ENCODE measurements at regions of chr3 and their contacts with region 1.

Region 1: GRCh38 chr3:32401556-32402081 is 10.0 kb downstream of the CMTM7 start:
- DNase-seq: peak; percentile 74
- H3K4me3 Mint-ChIP-seq: peak overlapping the region; percentile 85
- H3K27ac Mint-ChIP-seq: peak overlapping the region; percentile 99
- H3K4me1 Mint-ChIP-seq: peaks cover 58% of the 10 kb centered on the region
- H3K27me3 Mint-ChIP-seq: no peaks in the 10 kb centered on the region

Region 2: DNA sequence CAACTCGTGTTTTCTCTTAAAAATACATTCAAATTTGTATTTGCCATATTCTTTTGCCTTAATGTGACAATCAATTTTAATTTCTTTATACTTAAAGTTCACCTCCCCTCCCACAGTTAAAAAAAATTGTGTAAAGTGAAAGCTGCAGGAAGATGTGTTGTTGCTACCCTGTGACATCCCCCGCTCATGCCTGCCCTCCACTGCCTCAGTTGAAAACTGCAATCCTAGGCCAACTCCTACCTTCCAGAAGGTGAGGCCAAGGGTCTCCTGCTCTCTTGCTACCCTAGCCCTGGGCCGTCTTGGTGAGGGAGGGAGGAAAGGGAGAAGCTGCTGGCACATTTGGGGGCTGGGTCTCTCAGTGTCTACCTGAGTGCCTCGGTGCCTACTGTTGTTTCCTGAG is 66.9 kb before region 1 on chr3:
- CTCF ChIA-PET with region 1: no interaction called
- POLR2A ChIA-PET with region 1: no interaction called
- intact Hi-C with region 1: loop called (anchors 2 kb)
- DNase-seq: peak; percentile 80
- H3K4me3 Mint-ChIP-seq: no peak overlapping the region
- H3K27ac Mint-ChIP-seq: no peak overlapping the region
- H3K4me1 Mint-ChIP-seq: peaks cover 48% of the 10 kb centered on the region
- H3K27me3 Mint-ChIP-seq: no peaks in the 10 kb centered on the region

Region 3: GRCh38 chr3:32414520-32415202 is 13.0 kb after region 1 on chr3:
- CTCF ChIA-PET with region 1: interaction called, 4 read pairs
- POLR2A ChIA-PET with region 1: interaction called, 3 read pairs
- intact Hi-C with region 1: loop called (anchors 2 kb)
- DNase-seq: peak; percentile 68
- H3K4me3 Mint-ChIP-seq: peak overlapping the region; percentile 49
- H3K27ac Mint-ChIP-seq: peak overlapping the region; percentile 94
- H3K4me1 Mint-ChIP-seq: peaks cover 65% of the 10 kb centered on the region
- H3K27me3 Mint-ChIP-seq: no peaks in the 10 kb centered on the region

Region 4: DNA sequence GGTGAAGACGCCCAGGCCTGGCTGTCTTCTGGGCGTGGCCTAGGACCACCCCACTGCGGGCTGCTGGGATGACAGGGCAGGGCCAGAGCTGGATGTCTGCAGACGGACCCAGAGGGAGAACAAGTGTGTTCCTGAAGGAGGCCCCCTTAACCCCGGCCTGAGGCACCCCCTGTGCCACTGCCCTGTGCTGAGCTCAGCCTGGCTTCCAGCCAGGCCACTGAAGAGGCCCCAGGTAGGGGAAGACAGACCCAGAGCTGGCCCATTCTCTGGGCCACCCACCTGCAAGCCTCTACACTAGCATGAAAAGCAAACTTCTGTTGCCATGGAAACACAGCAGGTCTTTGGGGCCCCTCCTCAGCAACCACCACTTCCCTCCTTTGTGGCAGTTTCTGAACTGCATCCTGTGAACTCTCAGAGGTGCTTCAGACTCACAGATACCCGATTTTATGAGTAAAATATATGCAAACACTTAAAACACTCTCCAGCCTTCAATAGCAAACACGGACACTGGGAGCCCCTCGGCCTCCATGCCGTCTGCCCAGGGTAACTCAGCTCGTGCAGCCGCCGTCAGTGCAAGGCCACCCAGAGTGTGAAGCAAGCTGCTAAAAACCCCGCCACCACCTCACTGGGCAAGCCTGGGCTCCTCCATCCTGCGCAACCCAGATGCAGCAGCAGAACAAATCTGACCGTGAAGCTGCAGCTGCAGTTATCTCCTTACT is 58.6 kb after region 1 on chr3:
- CTCF ChIA-PET with region 1: no interaction called
- POLR2A ChIA-PET with region 1: no interaction called
- intact Hi-C with region 1: loop called (anchors 2 kb)
- DNase-seq: peak; percentile 86
- H3K4me3 Mint-ChIP-seq: peak overlapping the region; percentile 63
- H3K27ac Mint-ChIP-seq: no peak overlapping the region
- H3K4me1 Mint-ChIP-seq: peaks cover 31% of the 10 kb centered on the region
- H3K27me3 Mint-ChIP-seq: no peaks in the 10 kb centered on the region